ENCODE measurements at regions of chr6 and their contacts with region 1.

Region 1: DNA sequence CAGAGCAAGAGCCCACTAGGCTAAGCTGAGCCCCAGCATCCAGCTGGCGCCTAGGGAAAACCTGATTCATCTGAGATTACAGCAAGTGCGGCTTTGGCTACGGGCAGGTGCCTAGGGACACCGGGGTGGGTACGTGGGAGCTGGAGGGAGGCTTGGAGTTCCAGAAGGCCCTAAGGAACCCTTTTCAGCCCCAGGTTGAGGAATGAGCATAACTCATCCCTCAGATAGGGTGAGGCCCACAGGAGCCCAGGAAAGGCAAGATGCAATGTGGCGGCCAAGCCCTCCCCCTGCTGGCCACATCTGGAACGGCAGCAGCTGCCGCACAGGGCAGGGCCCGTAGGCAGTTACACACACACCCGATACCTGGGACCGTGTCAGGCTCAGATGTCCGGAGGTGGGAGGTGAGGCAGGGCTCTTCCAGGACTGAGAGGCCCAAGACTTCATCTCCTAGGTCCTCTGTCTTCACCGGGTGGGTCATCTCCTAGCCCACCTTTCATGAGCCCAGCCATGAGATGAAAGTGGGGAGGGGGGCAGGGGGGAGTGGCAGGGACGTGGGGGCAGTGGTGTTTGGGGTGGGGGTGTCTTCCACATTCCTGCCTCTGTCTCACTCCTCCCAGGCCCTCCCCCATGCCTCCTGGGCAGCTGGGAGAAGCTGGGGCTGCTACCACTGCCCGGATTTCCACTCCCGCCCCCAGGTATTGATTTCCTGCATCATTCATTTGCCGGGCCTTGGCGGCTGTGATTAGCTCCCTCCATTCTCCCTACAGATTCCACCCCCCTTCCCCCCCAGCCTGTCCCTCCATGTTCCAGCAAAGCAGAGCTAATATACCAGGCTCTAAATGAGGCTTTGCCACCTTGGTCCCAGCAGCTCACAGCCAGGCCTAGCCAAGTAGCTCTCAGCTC is 5.5 kb downstream of the MDGA1 start:
- DNase-seq: peak; percentile 90

Region 2: DNA sequence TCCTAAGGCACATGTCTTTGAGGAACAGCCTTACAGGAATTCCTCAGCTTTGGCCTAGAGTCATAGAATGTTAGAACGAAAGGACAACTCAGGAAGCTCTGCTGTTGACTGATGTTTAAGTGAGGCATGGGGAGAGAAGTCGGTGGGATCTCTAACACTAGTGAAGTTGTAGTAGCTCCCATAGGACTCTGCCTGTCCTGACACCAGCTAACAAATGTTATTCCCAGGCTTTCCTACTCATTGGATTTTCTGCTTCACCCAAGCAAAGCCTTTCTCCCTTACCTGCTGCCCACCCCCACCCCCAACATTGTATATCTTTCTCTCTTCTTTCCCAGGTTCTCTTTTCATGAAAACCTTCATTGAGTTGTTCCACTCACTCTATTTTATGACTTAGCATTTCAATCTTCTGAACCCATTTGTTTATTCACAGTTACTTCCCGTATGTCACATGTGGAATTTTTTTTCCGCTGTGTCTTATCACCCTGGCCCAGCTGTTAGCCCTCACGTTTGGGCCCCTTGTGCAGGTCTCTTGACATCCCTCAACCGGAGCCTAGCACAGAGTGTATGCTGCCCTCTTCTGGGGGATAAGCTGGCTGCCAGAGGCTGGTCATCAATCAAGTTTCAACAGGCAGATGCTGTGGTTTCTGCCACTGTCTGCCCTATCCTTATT is 377.5 kb before region 1 on chr6:
- intact Hi-C with region 1: loop called in 1 of 2 experiments (anchors 10 kb)
- DNase-seq: no peak

Region 3: GRCh38 chr6:37483917-37484785 is 208.0 kb before region 1 on chr6:
- intact Hi-C with region 1: loop called (anchors 10 kb)
- DNase-seq: no peak

Region 4: GRCh38 chr6:37971711-37972390 is 279.7 kb after region 1 on chr6:
- intact Hi-C with region 1: no loop called
- DNase-seq: no peak

Measured in posterior vena cava (tissue), 2 donors.